A549 (cell line): ENCODE measurements at regions of chr5 and their contacts with region 1.

Region 1: DNA sequence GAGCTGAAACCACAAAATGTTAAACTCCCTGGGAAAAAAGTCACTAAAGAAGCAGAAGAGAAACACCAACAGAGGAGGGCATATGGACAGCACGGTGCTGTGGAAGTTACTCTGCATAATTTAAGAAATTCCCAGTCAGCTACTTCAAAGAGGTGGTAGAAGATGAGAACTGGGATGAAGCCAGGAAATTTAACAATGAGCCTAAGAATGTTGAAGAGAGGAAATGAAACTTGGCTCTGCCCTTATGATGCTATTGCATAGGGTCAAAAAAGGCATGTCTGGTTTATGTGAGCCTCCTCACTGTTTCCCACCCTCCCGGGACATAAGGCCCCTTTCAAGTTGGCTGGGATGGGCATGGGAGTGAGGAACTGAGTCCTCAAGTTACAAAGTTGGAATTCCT is 25.4 kb upstream of the SNX18 start:
- DNase-seq: no peak
- ATAC-seq: no peak
- H3K4me3 ChIP-seq: no peak overlapping the region
- H3K27ac ChIP-seq: no peak overlapping the region
- H3K4me1 ChIP-seq: no peaks in the 10 kb centered on the region
- CTCF ChIP-seq: no peak
- EP300 ChIP-seq: no peak
- POLR2A ChIP-seq: no peak
- RAD21 ChIP-seq: no peak

Region 2: DNA sequence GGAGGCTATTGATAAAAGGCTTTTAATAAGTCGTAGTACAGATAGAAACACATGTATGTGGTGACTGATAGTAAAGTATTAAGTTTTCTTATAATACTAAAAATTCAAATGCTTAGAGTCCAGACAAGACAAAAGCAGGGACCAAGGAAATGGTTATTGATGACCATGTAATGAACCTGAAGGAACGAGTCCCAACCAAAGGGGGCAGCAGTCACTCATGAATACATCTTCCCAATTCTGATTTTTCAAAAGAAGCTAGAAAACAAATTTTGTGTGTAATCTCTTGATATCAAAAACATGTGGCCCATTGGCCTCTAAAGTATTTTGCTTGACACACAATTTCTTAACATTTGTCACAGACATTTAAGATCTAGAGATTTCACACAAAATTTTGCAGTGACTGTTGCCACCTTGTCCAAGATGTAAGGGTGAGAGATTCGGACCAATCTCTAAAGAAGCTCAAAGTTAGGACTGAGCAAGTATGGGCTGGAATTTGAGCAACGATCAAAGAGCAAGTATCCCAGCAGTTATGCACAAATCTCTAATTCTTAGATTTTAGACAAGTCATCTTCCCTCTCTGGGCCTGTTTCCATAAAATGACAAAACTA is 248.6 kb before region 1 on chr5:
- CTCF ChIA-PET with region 1: interaction called, 77 read pairs
- POLR2A ChIA-PET with region 1: interaction called, 5 read pairs
- DNase-seq: peak; percentile 12 to 52
- ATAC-seq: peak; percentile 50 to 65; a peak in 3 of 6 replicates
- H3K4me3 ChIP-seq: no peak overlapping the region
- H3K27ac ChIP-seq: no peak overlapping the region
- H3K4me1 ChIP-seq: 0 out of 3 replicates have a peak, but pooled peaks cover 3% of the 10 kb centered on the region
- CTCF ChIP-seq: peak; percentile 84
- EP300 ChIP-seq: no peak
- POLR2A ChIP-seq: no peak
- RAD21 ChIP-seq: peak; percentile 80

Region 3: GRCh38 chr5:54310433-54311175 is 181.6 kb before region 1 on chr5 and contains the start of gene ARL15:
- CTCF ChIA-PET with region 1: interaction called, 3 read pairs
- POLR2A ChIA-PET with region 1: interaction called, 17 read pairs
- DNase-seq: peak; percentile 95 to 98
- ATAC-seq: peak; percentile 94 to 97
- H3K4me3 ChIP-seq: peak within 1 kb of the TSS; percentile 86
- H3K27ac ChIP-seq: peak within 1 kb of the TSS; percentile 83 to 89
- H3K4me1 ChIP-seq: peaks cover 13% of the 10 kb centered on the region; the same call in 1 of the 3 replicates
- CTCF ChIP-seq: no peak
- EP300 ChIP-seq: no peak
- POLR2A ChIP-seq: peak; percentile 98
- RAD21 ChIP-seq: no peak
- polyA plus RNA-seq, gene ARL15: 11.8 and 15.9 TPM in 2 replicates

Region 4: GRCh38 chr5:54443270-54443669 is 48.9 kb before region 1 on chr5:
- CTCF ChIA-PET with region 1: interaction called, 75 read pairs
- POLR2A ChIA-PET with region 1: no interaction called
- DNase-seq: peak; percentile 27 to 33
- ATAC-seq: peak; percentile 55 to 81; a peak in 3 of 6 replicates
- H3K4me3 ChIP-seq: no peak overlapping the region
- H3K27ac ChIP-seq: no peak overlapping the region; a peak in 1 of 6 replicates
- H3K4me1 ChIP-seq: peaks cover 25% of the 10 kb centered on the region
- CTCF ChIP-seq: peak; percentile 57
- EP300 ChIP-seq: no peak
- POLR2A ChIP-seq: no peak
- RAD21 ChIP-seq: peak; percentile 57

Region 5: DNA sequence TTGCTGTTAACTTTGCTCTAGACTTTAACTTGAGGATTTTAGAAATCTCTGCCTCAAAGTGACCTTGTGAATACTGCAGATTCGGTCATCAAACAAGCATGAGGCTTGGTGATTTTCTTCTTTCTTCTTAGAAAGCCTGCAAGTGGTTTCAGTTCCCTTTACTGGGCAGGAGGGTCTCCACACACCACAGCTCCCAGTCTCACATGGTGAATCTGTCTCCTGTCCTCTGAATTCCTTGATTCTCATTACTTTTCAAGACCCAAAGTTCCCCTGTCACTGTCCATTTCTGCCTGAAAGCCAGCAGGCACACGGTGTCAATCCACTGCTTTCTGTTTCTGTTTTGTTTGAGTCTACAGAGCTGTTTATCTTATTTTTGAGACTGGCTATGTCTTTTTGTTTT is 22.6 kb before region 1 on chr5:
- CTCF ChIA-PET with region 1: interaction called, 12 read pairs
- POLR2A ChIA-PET with region 1: no interaction called
- DNase-seq: no peak
- ATAC-seq: no peak
- H3K4me3 ChIP-seq: no peak overlapping the region
- H3K27ac ChIP-seq: no peak overlapping the region
- H3K4me1 ChIP-seq: peaks cover 7% of the 10 kb centered on the region; the same call in 2 of the 3 replicates
- CTCF ChIP-seq: no peak
- EP300 ChIP-seq: no peak
- POLR2A ChIP-seq: no peak
- RAD21 ChIP-seq: no peak

Region 6: DNA sequence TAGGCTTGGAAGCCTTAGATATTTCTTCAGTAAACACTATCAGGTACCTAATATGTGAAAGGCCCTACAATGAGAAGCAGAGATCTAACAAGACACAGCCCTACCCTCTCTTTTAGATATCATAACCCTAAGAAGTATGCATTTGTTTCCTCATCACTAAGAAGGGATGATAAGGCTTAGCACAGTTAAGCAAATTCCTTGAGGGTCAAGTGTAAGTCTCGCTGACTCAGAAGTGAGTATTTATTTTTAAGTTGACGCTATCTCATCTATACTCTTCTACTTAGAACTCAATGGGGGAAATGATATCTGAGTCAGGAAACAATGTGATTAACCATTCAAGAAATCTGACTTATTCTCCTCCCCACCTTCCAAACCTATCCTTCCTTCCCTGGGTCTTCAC is 343.5 kb after region 1 on chr5:
- CTCF ChIA-PET with region 1: no interaction called
- POLR2A ChIA-PET with region 1: no interaction called
- DNase-seq: no peak
- ATAC-seq: no peak
- H3K4me3 ChIP-seq: no peak overlapping the region
- H3K27ac ChIP-seq: no peak overlapping the region
- H3K4me1 ChIP-seq: no peaks in the 10 kb centered on the region
- CTCF ChIP-seq: no peak
- EP300 ChIP-seq: no peak
- POLR2A ChIP-seq: no peak
- RAD21 ChIP-seq: no peak